ENCODE measurements at regions of chr19 and their contacts with region 1.

Region 1: GRCh38 chr19:14529254-14530004 is at the start of gene TECR:
- DNase-seq: peak; percentile 100
- H3K4me3 ChIP-seq: peak within 1 kb of the TSS; percentile 79 to 91
- H3K27ac ChIP-seq: peak within 1 kb of the TSS; percentile 71 to 84
- H3K4me1 ChIP-seq: peaks cover 0 to 9% of the 10 kb centered on the region in 2 donors
- H3K27me3 ChIP-seq: no peaks in the 10 kb centered on the region
- CTCF ChIP-seq: no peak
- total RNA-seq, gene TECR: 88.7 TPM

Region 2: DNA sequence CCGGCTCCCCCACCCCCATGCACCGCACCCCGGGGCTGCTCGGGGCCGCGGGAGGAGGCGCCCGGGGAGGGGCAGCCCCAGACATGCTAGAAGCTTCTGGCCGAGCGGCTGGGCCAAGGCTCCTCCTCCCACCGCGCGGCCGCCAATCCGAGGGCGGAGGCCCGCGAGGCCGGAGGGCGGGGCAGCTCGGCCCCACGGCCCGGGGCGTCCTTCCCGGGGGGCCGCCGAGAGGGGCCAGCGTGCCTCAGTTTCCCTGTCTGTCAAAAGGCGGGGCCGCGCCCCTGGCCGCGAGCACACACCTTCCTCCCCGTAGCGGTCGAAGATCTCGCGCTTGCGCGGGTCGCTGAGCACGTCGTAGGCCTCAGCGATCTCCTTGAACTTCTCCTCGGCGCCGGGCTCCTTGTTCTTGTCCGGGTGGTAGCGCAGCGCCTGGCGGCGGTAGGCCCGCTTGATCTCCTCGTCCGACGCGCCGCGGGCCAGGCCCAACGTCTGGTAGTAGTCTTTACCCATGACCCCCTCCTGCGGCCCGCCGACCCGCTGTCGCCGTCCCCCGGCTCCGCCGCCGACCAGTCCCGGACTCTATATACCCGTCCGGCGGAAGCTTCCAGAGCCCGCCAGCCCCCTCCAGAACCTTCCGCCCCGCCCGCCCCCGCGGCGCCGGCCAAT is 11.5 kb before region 1 on chr19 and contains the start of gene DNAJB1:
- intact Hi-C with region 1: loop called (anchors 1 kb)
- DNase-seq: peak; percentile 29 to 88
- H3K4me3 ChIP-seq: peak within 1 kb of the TSS; percentile 96 to 98
- H3K27ac ChIP-seq: peak within 1 kb of the TSS; percentile 99
- H3K4me1 ChIP-seq: peaks cover 8 to 34% of the 10 kb centered on the region in 2 donors
- H3K27me3 ChIP-seq: no peaks in the 10 kb centered on the region
- CTCF ChIP-seq: no peak
- total RNA-seq, gene DNAJB1: 73.8 TPM

Region 3: GRCh38 chr19:14997981-14998380 is 468.6 kb after region 1 on chr19:
- intact Hi-C with region 1: no loop called
- DNase-seq: no peak
- H3K4me3 ChIP-seq: no peak overlapping the region
- H3K27ac ChIP-seq: no peak overlapping the region
- H3K4me1 ChIP-seq: no peaks in the 10 kb centered on the region
- H3K27me3 ChIP-seq: no peaks in the 10 kb centered on the region
- CTCF ChIP-seq: no peak